GM12878 (cell line): ENCODE measurements at regions of chr3 and their contacts with region 1.

Region 1: DNA sequence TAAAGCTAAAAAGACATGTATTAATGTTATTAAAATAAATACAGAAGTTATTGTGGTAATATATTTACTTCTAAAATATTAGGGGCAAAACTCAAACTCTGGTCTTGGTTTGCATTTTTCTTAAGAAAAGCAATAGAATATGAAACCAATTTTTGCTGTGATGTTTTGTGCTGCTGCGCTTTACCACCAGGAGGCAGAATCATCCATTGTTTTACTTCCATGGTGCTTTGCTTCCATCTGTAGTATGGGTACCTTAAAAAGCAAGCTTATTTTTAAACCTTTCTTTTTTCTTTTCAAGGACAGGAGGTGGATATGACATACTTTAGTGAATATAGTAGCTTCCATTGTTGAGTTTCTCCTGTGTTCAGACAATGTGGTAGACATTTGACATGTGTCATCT is 46.6 kb upstream of the MRPL3 start:
- DNase-seq: no peak
- ATAC-seq: peak; percentile 20; the same call in 1 of the 3 replicates
- H3K4me3 ChIP-seq: no peak overlapping the region
- H3K27ac ChIP-seq: no peak overlapping the region
- H3K4me1 ChIP-seq: peaks cover 14% of the 10 kb centered on the region
- H3K27me3 ChIP-seq: no peaks in the 10 kb centered on the region
- CTCF ChIP-seq: peak; percentile 70 to 76 (median 73)
- EP300 ChIP-seq: no peak
- POLR2A ChIP-seq: no peak
- RAD21 ChIP-seq: peak; percentile 78

Region 2: GRCh38 chr3:131537531-131537930 is 11.8 kb before region 1 on chr3:
- CTCF ChIA-PET with region 1: interaction called, 10 read pairs
- POLR2A ChIA-PET with region 1: no interaction called
- RAD21 ChIA-PET with region 1: no interaction called
- SMC1A ChIA-PET with region 1: interaction called, 6 read pairs
- in situ Hi-C with region 1: no loop called
- intact Hi-C with region 1: no loop called
- DNase-seq: no peak
- ATAC-seq: no peak
- H3K4me3 ChIP-seq: no peak overlapping the region
- H3K27ac ChIP-seq: no peak overlapping the region
- H3K4me1 ChIP-seq: no peaks in the 10 kb centered on the region
- H3K27me3 ChIP-seq: no peaks in the 10 kb centered on the region; a peak in 2 of 4 replicates
- CTCF ChIP-seq: no peak
- EP300 ChIP-seq: no peak
- POLR2A ChIP-seq: no peak
- RAD21 ChIP-seq: no peak

Region 3: GRCh38 chr3:131630097-131630496 is 80.8 kb after region 1 on chr3:
- CTCF ChIA-PET with region 1: interaction called, 3 read pairs
- POLR2A ChIA-PET with region 1: interaction called, 4 read pairs
- RAD21 ChIA-PET with region 1: no interaction called
- SMC1A ChIA-PET with region 1: interaction called, 4 read pairs
- in situ Hi-C with region 1: no loop called
- intact Hi-C with region 1: loop called (anchors 5 kb)
- DNase-seq: peak; percentile 65
- ATAC-seq: peak; percentile 100
- H3K4me3 ChIP-seq: no peak overlapping the region
- H3K27ac ChIP-seq: no peak overlapping the region
- H3K4me1 ChIP-seq: peaks cover 16% of the 10 kb centered on the region
- H3K27me3 ChIP-seq: no peaks in the 10 kb centered on the region
- CTCF ChIP-seq: no peak
- EP300 ChIP-seq: peak in 1 of 2 experiments; percentile 41; a peak in 1 of 4 replicates
- POLR2A ChIP-seq: no peak
- RAD21 ChIP-seq: no peak

Region 4: GRCh38 chr3:131705558-131706051 is 156.3 kb after region 1 on chr3:
- CTCF ChIA-PET with region 1: interaction called, 14 read pairs
- POLR2A ChIA-PET with region 1: no interaction called
- RAD21 ChIA-PET with region 1: interaction called, 9 read pairs
- SMC1A ChIA-PET with region 1: interaction called, 13 read pairs
- in situ Hi-C with region 1: no loop called
- intact Hi-C with region 1: loop called (anchors 5 kb)
- DNase-seq: no peak
- ATAC-seq: peak; percentile 89
- H3K4me3 ChIP-seq: no peak overlapping the region
- H3K27ac ChIP-seq: no peak overlapping the region
- H3K4me1 ChIP-seq: peaks cover 10% of the 10 kb centered on the region; the same call in 1 of the 2 replicates
- H3K27me3 ChIP-seq: no peaks in the 10 kb centered on the region
- CTCF ChIP-seq: no peak
- EP300 ChIP-seq: peak in 1 of 2 experiments; percentile 22; a peak in 1 of 4 replicates
- POLR2A ChIP-seq: no peak
- RAD21 ChIP-seq: 0 out of 2 replicates have a peak, but pooled peaks have one; percentile 9

Region 5: GRCh38 chr3:131762981-131763564 is 213.7 kb after region 1 on chr3:
- CTCF ChIA-PET with region 1: interaction called, 4 read pairs
- POLR2A ChIA-PET with region 1: no interaction called
- RAD21 ChIA-PET with region 1: no interaction called
- SMC1A ChIA-PET with region 1: interaction called, 12 read pairs
- in situ Hi-C with region 1: no loop called
- intact Hi-C with region 1: no loop called
- DNase-seq: no peak
- ATAC-seq: no peak
- H3K4me3 ChIP-seq: no peak overlapping the region
- H3K27ac ChIP-seq: no peak overlapping the region
- H3K4me1 ChIP-seq: no peaks in the 10 kb centered on the region
- H3K27me3 ChIP-seq: no peaks in the 10 kb centered on the region
- CTCF ChIP-seq: no peak
- EP300 ChIP-seq: no peak
- POLR2A ChIP-seq: no peak
- RAD21 ChIP-seq: no peak

Region 6: GRCh38 chr3:132029182-132029902 is 480.0 kb after region 1 on chr3:
- CTCF ChIA-PET with region 1: interaction called, 88 read pairs
- POLR2A ChIA-PET with region 1: no interaction called
- RAD21 ChIA-PET with region 1: interaction called, 40 read pairs
- SMC1A ChIA-PET with region 1: interaction called, 34 read pairs
- in situ Hi-C with region 1: loop called (anchors 5 kb)
- intact Hi-C with region 1: loop called (anchors 1 kb)
- DNase-seq: no peak
- ATAC-seq: peak; percentile 99
- H3K4me3 ChIP-seq: no peak overlapping the region
- H3K27ac ChIP-seq: no peak overlapping the region
- H3K4me1 ChIP-seq: no peaks in the 10 kb centered on the region
- H3K27me3 ChIP-seq: peaks cover 0 to 1% of the 10 kb centered on the region in 2 experiments; a peak in 1 of 4 replicates
- CTCF ChIP-seq: peak; percentile 89 to 92 (median 92); a peak in 5 of 6 replicates
- EP300 ChIP-seq: no peak
- POLR2A ChIP-seq: no peak
- RAD21 ChIP-seq: peak; percentile 94